Adrenal gland (tissue), 19 donors: ENCODE measurements at regions of chr11 and their contacts with region 1.

Region 1: GRCh38 chr11:43327987-43328386 is 16.2 kb downstream of the API5 start:
- DNase-seq: peak in 2 of 7 donors; percentile 25 to 33
- H3K4me3 ChIP-seq: no peak overlapping the region
- H3K27ac ChIP-seq: no peak overlapping the region
- H3K4me1 ChIP-seq: peaks cover 0 to 8% of the 10 kb centered on the region in 2 donors
- H3K27me3 ChIP-seq: no peaks in the 10 kb centered on the region
- CTCF ChIP-seq: no peak
- POLR2A ChIP-seq: no peak

Region 2: DNA sequence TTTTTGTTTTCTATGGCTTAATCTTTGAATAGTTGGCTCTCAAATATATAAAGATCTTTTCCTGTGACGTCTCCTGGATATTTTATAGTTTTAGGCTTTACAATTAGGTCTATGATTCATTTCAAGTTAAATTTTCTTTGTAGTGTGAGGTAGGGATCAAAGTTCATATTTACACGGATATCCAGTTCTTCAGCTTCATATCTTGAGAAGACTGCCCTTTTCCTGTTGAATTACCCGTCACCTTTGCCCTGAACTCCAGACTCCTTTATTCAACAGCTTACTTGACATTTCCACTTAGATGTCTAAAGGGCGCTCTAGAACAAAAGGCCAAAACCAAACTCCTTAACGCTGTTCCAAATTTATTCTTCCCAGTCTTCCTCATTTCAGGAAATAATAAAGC is 82.4 kb after region 1 on chr11:
- intact Hi-C with region 1: loop called in 1 of 2 experiments (anchors 5 kb)
- DNase-seq: no peak
- H3K4me3 ChIP-seq: no peak overlapping the region
- H3K27ac ChIP-seq: no peak overlapping the region
- H3K4me1 ChIP-seq: no peaks in the 10 kb centered on the region
- H3K27me3 ChIP-seq: no peaks in the 10 kb centered on the region
- CTCF ChIP-seq: no peak
- POLR2A ChIP-seq: no peak

Region 3: GRCh38 chr11:43434893-43435292 is 106.9 kb after region 1 on chr11:
- intact Hi-C with region 1: no loop called
- DNase-seq: no peak
- H3K4me3 ChIP-seq: no peak overlapping the region
- H3K27ac ChIP-seq: no peak overlapping the region
- H3K4me1 ChIP-seq: no peaks in the 10 kb centered on the region
- H3K27me3 ChIP-seq: no peaks in the 10 kb centered on the region
- CTCF ChIP-seq: no peak
- POLR2A ChIP-seq: no peak